T-cell (primary cell): ENCODE measurements at regions of chr2 and their contacts with region 1.

Region 1: DNA sequence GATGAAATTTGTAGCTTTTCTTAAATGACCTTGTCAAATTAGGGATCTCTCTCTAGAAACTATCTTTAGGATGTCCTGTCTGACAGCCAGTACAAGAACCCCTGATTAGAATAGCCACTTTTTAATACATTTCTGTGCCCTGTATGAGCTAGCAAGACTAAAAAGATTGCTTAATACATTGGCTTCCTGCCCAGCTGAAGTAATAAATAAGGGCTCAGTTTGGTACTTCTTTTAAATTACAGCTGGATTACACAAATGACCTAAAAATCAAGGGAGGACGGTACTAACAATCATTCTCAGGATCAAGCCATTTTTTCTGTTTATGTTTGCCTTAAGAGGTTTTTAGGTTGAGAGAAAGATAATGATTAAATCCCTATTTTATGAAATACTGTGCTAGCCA is 11.6 kb upstream of the OLA1 start:
- DNase-seq: no peak
- ATAC-seq: no peak
- H3K4me3 ChIP-seq: no peak overlapping the region
- H3K4me3 Mint-ChIP-seq: no peak overlapping the region
- H3K27ac ChIP-seq: no peak overlapping the region
- H3K27ac Mint-ChIP-seq: no peak overlapping the region
- H3K4me1 ChIP-seq: no peaks in the 10 kb centered on the region
- H3K4me1 Mint-ChIP-seq: no peaks in the 10 kb centered on the region
- H3K27me3 ChIP-seq: peaks cover 0 to 3% of the 10 kb centered on the region in 2 experiments
- H3K27me3 Mint-ChIP-seq: peaks cover 17 to 26% of the 10 kb centered on the region in 2 donors

Region 2: DNA sequence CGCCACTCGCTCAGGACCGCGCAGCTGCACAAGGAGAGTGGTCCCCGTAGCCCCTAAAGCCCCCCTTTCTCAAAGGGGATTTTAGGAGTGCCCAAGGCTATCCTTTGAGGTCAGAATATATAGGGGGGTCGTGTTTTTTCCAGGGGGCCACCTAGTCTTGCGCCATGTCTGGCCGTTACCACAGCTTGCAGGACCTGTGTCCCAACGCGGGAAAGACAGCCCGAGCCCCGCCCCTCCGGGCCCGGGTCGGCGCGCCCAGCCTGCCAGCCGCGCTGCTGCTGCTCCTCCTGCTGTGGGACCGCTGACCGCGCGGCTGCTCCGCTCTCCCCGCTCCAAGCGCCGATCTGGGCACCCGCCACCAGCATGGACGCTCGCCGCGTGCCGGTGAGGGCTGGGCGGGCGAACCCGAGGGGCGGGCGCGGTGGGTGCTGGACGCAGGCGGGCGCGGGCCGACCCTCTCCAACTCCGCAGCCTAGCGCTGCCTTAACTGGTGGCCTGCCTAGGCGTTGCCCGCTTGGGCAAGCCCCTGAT is 905.3 kb before region 1 on chr2 and contains the start of gene CDCA7:
- CTCF ChIA-PET with region 1: no interaction called
- POLR2A ChIA-PET with region 1: no interaction called
- DNase-seq: peak in 23 of 35 experiments; percentile 1 to 51 (median 17)
- ATAC-seq: peak; percentile 65 to 74 (median 68)
- H3K4me3 ChIP-seq: peak within 1 kb of the TSS; percentile 54 to 97
- H3K4me3 Mint-ChIP-seq: peak within 1 kb of the TSS; percentile 82 to 86 (median 83)
- H3K27ac ChIP-seq: peak within 1 kb of the TSS; percentile 47
- H3K27ac Mint-ChIP-seq: peak within 1 kb of the TSS in 1 of 2 donors; percentile 51
- H3K4me1 ChIP-seq: peaks cover 9 to 20% of the 10 kb centered on the region in 2 experiments
- H3K4me1 Mint-ChIP-seq: peaks cover 10 to 26% (median 17%) of the 10 kb centered on the region in 3 donors
- H3K27me3 ChIP-seq: peaks cover 0 to 30% of the 10 kb centered on the region in 2 experiments
- H3K27me3 Mint-ChIP-seq: peaks cover 33 to 46% of the 10 kb centered on the region in 2 donors
- total RNA-seq, gene CDCA7: 1.9 to 7.2 (median 3.6) TPM

Region 3: GRCh38 chr2:174292908-174293307 is 32.9 kb after region 1 on chr2:
- CTCF ChIA-PET with region 1: no interaction called
- POLR2A ChIA-PET with region 1: no interaction called
- DNase-seq: no peak
- ATAC-seq: no peak
- H3K4me3 ChIP-seq: no peak overlapping the region
- H3K4me3 Mint-ChIP-seq: no peak overlapping the region
- H3K27ac ChIP-seq: no peak overlapping the region
- H3K27ac Mint-ChIP-seq: no peak overlapping the region
- H3K4me1 ChIP-seq: no peaks in the 10 kb centered on the region
- H3K4me1 Mint-ChIP-seq: no peaks in the 10 kb centered on the region
- H3K27me3 ChIP-seq: peaks cover 0 to 14% of the 10 kb centered on the region in 2 experiments
- H3K27me3 Mint-ChIP-seq: peaks cover 18 to 26% of the 10 kb centered on the region in 2 donors

Region 4: GRCh38 chr2:174334781-174335251 is 74.8 kb after region 1 on chr2 and contains the start of gene SP9:
- CTCF ChIA-PET with region 1: no interaction called
- POLR2A ChIA-PET with region 1: interaction called in 1 of 2 experiments, 10 read pairs
- DNase-seq: peak in 2 of 35 experiments; percentile 18 to 46
- ATAC-seq: no peak
- H3K4me3 ChIP-seq: peak within 1 kb of the TSS in 1 of 2 donors; percentile 75
- H3K4me3 Mint-ChIP-seq: peak within 1 kb of the TSS; percentile 39 to 70 (median 53)
- H3K27ac ChIP-seq: no peak within 1 kb of the TSS
- H3K27ac Mint-ChIP-seq: peak within 1 kb of the TSS in 1 of 2 donors; percentile 55
- H3K4me1 ChIP-seq: peaks cover 17 to 57% of the 10 kb centered on the region in 2 experiments
- H3K4me1 Mint-ChIP-seq: peaks cover 26 to 39% (median 37%) of the 10 kb centered on the region in 3 donors
- H3K27me3 ChIP-seq: peaks cover 42 to 74% of the 10 kb centered on the region in 2 experiments
- H3K27me3 Mint-ChIP-seq: peaks cover 64 to 76% of the 10 kb centered on the region in 2 donors
- total RNA-seq, gene SP9: not detected